ENCODE measurements at regions of chr15 and their contacts with region 1.

Region 1: GRCh38 chr15:48285329-48286214 is 45.7 kb upstream of the DUT start:
- DNase-seq: peak in 1 of 2 donors; percentile 56
- ATAC-seq: peak; percentile 92
- H3K4me3 ChIP-seq: peak overlapping the region in 1 of 2 donors; percentile 69
- H3K27ac ChIP-seq: peak overlapping the region; percentile 60 to 68
- H3K4me1 ChIP-seq: peaks cover 5 to 24% of the 10 kb centered on the region in 2 donors
- H3K27me3 ChIP-seq: no peaks in the 10 kb centered on the region

Region 2: DNA sequence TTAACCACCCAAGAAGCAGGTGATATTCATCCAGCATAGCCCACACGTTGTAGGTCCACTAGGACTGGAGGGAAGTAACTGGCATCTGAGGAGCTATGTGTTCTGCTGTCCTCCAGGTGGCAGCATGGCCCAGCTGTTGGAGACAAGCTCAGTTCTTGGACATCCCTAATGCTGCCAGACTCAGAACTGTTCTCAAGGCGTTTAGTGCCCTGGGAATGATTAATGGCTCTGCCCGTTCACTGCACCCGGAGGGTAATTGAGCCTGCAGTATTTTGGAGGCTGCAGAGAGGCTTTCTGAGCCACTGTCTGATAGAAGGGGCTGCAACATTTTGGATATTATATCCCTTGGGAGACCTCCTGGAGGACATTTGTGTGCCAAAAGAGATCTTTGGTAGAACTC is 1089.5 kb before region 1 on chr15:
- intact Hi-C with region 1: loop called (anchors 5 to 10 kb)
- DNase-seq: peak; percentile 84 to 91
- ATAC-seq: peak; percentile 94
- H3K4me3 ChIP-seq: no peak overlapping the region
- H3K27ac ChIP-seq: no peak overlapping the region
- H3K4me1 ChIP-seq: no peaks in the 10 kb centered on the region
- H3K27me3 ChIP-seq: no peaks in the 10 kb centered on the region

Region 3: GRCh38 chr15:47473832-47474231 is 811.7 kb before region 1 on chr15:
- intact Hi-C with region 1: loop called in 1 of 2 experiments (anchors 10 kb)
- DNase-seq: peak; percentile 76 to 82
- ATAC-seq: peak; percentile 93
- H3K4me3 ChIP-seq: no peak overlapping the region
- H3K27ac ChIP-seq: peak overlapping the region in 1 of 2 donors; percentile 76
- H3K4me1 ChIP-seq: peaks cover 0 to 19% of the 10 kb centered on the region in 2 donors
- H3K27me3 ChIP-seq: no peaks in the 10 kb centered on the region

Region 4: DNA sequence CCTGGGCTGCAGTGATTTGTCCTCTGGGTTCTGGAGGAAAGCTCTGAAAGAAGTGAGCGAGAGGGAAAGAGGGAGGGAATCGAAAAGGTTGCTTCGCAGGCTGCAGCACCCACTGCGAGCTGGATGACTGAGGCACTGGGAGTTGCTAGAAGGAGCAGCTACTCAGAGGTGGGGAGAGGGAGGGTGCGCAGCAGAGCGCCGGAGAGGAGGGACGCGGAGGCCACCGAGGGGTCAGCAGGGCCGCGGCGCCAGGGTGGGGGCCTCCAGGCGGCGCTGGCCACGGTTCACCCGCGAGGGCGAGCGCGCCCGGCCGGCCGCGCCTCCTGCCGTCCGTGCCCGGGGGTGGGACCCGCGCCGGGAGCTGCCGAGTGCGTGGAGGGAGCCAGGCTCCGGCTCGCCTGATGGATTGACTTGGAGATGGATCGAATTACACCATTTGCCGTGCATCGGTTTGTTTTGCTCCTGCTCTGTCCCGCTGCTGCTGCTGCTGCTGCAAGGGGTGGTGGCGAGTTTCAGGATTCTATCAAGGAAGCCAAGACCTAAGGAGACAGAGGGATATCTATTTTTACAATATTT is 568.4 kb before region 1 on chr15 and contains the start of gene SEMA6D:
- intact Hi-C with region 1: loop called in 1 of 2 experiments (anchors 5 kb)
- DNase-seq: peak; percentile 82 to 91
- ATAC-seq: peak; percentile 90
- H3K4me3 ChIP-seq: peak within 1 kb of the TSS; percentile 84 to 99
- H3K27ac ChIP-seq: peak within 1 kb of the TSS; percentile 62 to 88
- H3K4me1 ChIP-seq: peaks cover 6 to 7% of the 10 kb centered on the region in 2 donors
- H3K27me3 ChIP-seq: no peaks in the 10 kb centered on the region
- total RNA-seq, gene SEMA6D: 9.0 to 22.7 TPM

Region 5: GRCh38 chr15:47987908-47988532 is 297.6 kb before region 1 on chr15:
- intact Hi-C with region 1: loop called in 1 of 2 experiments (anchors 5 kb)
- DNase-seq: no peak
- ATAC-seq: peak; percentile 87
- H3K4me3 ChIP-seq: no peak overlapping the region
- H3K27ac ChIP-seq: no peak overlapping the region
- H3K4me1 ChIP-seq: no peaks in the 10 kb centered on the region
- H3K27me3 ChIP-seq: no peaks in the 10 kb centered on the region

Region 6: DNA sequence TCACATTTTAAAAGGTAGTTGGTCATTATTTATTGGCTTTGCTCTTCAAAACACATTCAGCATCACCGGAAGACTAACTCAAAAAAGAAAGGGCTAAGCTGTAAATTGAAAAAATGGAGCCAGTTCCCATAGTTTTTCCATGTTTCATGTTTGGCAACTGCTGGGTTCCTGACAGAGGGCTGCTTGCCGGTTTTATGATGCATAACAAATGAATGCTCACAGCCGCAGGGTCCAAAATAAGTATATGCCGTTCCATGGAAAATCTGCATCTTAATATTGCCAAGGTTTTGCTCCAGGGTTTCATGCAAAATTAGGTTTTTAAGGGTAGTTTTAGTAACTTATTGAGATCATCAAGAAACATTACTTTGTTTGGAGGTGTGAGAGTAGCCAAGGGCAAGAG is 63.7 kb before region 1 on chr15:
- intact Hi-C with region 1: loop called in 1 of 2 experiments (anchors 5 kb)
- DNase-seq: peak in 1 of 2 donors; percentile 55
- ATAC-seq: peak; percentile 81
- H3K4me3 ChIP-seq: peak overlapping the region in 1 of 2 donors; percentile 59
- H3K27ac ChIP-seq: peak overlapping the region in 1 of 2 donors; percentile 87
- H3K4me1 ChIP-seq: peaks cover 3 to 32% of the 10 kb centered on the region in 2 donors
- H3K27me3 ChIP-seq: no peaks in the 10 kb centered on the region

Region 7: DNA sequence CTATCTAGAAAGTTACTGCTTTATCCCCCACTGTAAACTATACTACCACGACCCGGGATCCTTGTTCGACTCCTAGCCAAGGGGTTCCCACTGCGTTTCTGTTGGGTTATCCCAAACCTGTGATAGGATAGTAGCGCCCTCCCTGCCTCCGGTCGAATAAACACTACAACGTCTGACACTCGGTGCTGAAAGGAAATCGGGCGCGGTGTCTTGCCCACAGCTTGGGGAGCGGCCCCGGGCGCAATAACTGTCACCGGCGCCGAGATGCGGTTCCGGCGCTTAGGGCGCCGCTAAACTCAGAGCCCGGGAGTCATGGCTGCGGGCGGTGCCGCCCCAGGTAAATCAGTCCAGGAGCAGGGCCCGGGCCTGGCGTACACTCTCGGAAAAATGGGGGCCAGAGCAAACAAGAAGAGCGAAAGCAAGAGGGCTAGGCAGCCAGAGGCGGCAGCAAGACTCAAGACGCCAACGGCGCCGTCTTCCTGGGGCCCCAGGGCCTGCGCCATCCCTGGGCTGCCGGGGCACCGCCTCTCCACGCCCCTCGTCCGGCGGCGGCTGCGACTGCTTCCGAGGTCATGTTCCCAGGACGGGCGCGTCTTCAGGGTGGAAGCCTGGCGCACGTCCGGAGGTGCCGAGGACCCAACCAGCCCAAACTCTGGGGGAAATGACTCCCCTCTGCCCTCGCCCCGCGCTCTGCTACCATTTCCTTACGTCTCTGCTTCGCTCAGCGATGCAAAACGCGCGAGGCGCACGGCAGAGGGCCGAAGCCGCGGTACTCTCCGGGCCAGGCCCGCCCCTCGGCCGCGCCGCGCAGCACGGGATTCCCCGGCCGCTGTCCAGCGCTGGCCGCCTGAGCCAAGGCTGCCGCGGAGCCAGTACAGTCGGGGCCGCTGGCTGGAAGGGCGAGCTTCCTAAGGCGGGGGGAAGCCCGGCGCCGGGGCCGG is 45.6 kb after region 1 on chr15 and contains the start of gene DUT:
- intact Hi-C with region 1: loop called in 1 of 2 experiments (anchors 5 kb)
- DNase-seq: peak; percentile 92 to 95
- ATAC-seq: peak; percentile 97
- H3K4me3 ChIP-seq: peak within 1 kb of the TSS; percentile 58 to 82
- H3K27ac ChIP-seq: peak within 1 kb of the TSS; percentile 62 to 74
- H3K4me1 ChIP-seq: no peaks in the 10 kb centered on the region
- H3K27me3 ChIP-seq: no peaks in the 10 kb centered on the region
- total RNA-seq, gene DUT: 54.8 to 77.7 TPM

Measured in aorta (tissue), 5 donors.